Vagina (tissue), 2 donors: ENCODE measurements at regions of chr4 and their contacts with region 1.

Region 1: GRCh38 chr4:39873823-39874222 is 103.9 kb downstream of the PDS5A start:
- DNase-seq: no peak
- H3K4me3 ChIP-seq: no peak overlapping the region
- H3K27ac ChIP-seq: no peak overlapping the region
- H3K4me1 ChIP-seq: no peaks in the 10 kb centered on the region
- H3K27me3 ChIP-seq: no peaks in the 10 kb centered on the region
- CTCF ChIP-seq: no peak
- POLR2A ChIP-seq: no peak

Region 2: GRCh38 chr4:40728333-40728732 is 854.5 kb after region 1 on chr4:
- intact Hi-C with region 1: loop called (anchors 5 kb)
- DNase-seq: no peak
- H3K4me3 ChIP-seq: no peak overlapping the region
- H3K27ac ChIP-seq: no peak overlapping the region
- H3K4me1 ChIP-seq: no peaks in the 10 kb centered on the region
- H3K27me3 ChIP-seq: no peaks in the 10 kb centered on the region
- CTCF ChIP-seq: no peak
- POLR2A ChIP-seq: no peak